ENCODE measurements at regions of chr2 and their contacts with region 1.

Region 1: GRCh38 chr2:96554293-96555145 is 18.0 kb downstream of the ARID5A start:
- DNase-seq: peak; percentile 58
- H3K4me3 Mint-ChIP-seq: no peak overlapping the region
- H3K27ac Mint-ChIP-seq: no peak overlapping the region
- H3K4me1 Mint-ChIP-seq: peaks cover 7% of the 10 kb centered on the region
- H3K27me3 Mint-ChIP-seq: no peaks in the 10 kb centered on the region
- CTCF ChIP-seq: peak; percentile 89

Region 2: DNA sequence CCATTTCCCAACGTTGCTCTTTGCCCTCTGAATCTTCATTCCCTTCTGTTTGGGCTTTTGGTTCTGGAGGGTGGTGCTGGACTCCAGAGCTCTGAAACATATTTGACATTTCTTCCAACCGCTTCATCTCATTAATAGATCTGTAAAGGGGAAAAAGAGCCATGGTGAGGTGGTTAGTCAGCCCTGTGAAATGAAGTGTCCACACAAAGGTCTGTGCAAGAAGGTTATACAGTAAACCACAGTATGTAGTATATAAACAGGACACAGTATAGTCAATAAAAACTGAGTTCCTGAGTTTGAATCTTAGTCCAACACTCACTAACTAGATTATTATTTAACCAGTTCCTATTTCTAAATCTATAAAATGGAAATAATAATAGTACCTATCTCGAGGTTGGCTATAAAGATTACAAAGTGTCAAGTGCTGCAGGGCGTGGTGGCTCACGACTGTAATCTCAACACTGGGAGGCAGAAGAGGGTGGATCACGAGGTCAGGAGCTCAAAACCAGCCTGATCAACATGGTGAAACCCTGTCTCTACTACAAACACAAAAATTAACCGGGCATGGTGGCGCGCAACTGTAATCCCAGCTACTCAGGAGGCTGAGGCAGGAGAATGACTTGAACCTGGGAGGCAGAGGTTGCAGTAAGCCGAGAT is 359.0 kb before region 1 on chr2:
- CTCF ChIA-PET with region 1: no interaction called
- POLR2A ChIA-PET with region 1: no interaction called
- intact Hi-C with region 1: no loop called
- DNase-seq: no peak
- H3K4me3 Mint-ChIP-seq: no peak overlapping the region
- H3K27ac Mint-ChIP-seq: no peak overlapping the region
- H3K4me1 Mint-ChIP-seq: peaks cover 2% of the 10 kb centered on the region
- H3K27me3 Mint-ChIP-seq: no peaks in the 10 kb centered on the region
- CTCF ChIP-seq: no peak

Region 3: DNA sequence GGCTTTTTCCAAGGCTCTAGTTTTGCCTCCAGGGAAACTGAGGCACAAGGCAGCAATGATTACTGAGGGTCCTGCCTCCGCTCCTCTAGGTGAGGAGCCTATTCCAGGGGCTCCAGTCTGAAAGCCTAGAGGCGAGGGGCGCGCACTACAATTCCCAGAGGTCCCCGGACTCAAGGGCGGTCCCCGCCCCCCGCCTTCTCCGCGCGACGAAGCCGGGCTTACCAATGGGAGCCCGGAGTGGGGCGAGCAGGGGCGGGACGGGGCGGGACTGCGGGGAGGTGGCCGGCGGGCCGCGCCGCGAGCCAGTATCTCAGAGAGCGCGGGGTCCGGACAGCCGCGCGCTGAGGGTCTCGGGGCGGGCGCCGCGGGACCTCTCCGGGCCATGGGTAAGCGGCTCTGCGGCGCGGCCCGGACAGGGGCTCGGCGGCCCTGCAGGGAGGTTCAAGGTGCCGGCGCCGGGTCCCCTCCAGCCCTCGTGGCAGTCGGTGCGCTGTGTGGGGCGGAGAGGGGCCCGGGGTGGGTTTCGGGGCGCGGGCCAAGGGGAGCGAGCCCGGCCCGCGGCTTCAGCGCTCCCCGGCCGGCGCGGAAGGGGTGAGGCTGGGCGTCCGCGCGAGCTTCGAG is 18.0 kb before region 1 on chr2 and contains the start of gene ARID5A:
- CTCF ChIA-PET with region 1: interaction called, 46 read pairs
- POLR2A ChIA-PET with region 1: interaction called, 19 read pairs
- intact Hi-C with region 1: loop called (anchors 1 kb)
- DNase-seq: peak; percentile 82
- H3K4me3 Mint-ChIP-seq: peak within 1 kb of the TSS; percentile 76
- H3K27ac Mint-ChIP-seq: no peak within 1 kb of the TSS
- H3K4me1 Mint-ChIP-seq: peaks cover 30% of the 10 kb centered on the region
- H3K27me3 Mint-ChIP-seq: no peaks in the 10 kb centered on the region
- CTCF ChIP-seq: no peak
- total RNA-seq, gene ARID5A: 3.0 and 3.4 TPM in 2 replicates

Region 4: GRCh38 chr2:96541398-96542152 is 12.9 kb before region 1 on chr2:
- CTCF ChIA-PET with region 1: interaction called, 30 read pairs
- POLR2A ChIA-PET with region 1: interaction called, 7 read pairs
- intact Hi-C with region 1: loop called (anchors 1 kb)
- DNase-seq: no peak
- H3K4me3 Mint-ChIP-seq: no peak overlapping the region
- H3K27ac Mint-ChIP-seq: no peak overlapping the region
- H3K4me1 Mint-ChIP-seq: peaks cover 8% of the 10 kb centered on the region
- H3K27me3 Mint-ChIP-seq: no peaks in the 10 kb centered on the region
- CTCF ChIP-seq: no peak

Region 5: GRCh38 chr2:96565111-96565510 is 10.6 kb after region 1 on chr2:
- CTCF ChIA-PET with region 1: interaction called, 17 read pairs
- POLR2A ChIA-PET with region 1: no interaction called
- intact Hi-C with region 1: no loop called
- DNase-seq: no peak
- H3K4me3 Mint-ChIP-seq: no peak overlapping the region
- H3K27ac Mint-ChIP-seq: no peak overlapping the region
- H3K4me1 Mint-ChIP-seq: no peaks in the 10 kb centered on the region
- H3K27me3 Mint-ChIP-seq: no peaks in the 10 kb centered on the region
- CTCF ChIP-seq: no peak

Region 6: DNA sequence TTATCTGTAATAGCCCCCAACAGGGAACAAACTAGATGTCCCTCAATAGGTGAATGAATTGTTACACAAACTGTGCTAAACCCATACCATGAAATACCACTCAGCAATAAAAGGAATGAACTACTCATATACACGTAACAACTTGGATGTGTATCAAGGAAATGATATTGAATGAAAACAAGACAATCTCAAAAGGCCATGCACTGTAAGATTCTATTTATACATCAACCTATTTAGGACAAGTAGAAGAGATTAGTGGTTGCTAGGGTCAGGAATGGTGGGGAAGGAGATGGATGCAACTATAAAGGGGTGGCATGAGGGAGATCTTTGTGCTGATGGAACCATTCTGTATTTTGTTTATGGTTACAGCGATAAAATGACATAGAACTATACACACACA is 36.5 kb after region 1 on chr2:
- CTCF ChIA-PET with region 1: no interaction called
- POLR2A ChIA-PET with region 1: no interaction called
- intact Hi-C with region 1: no loop called
- DNase-seq: no peak
- H3K4me3 Mint-ChIP-seq: no peak overlapping the region
- H3K27ac Mint-ChIP-seq: no peak overlapping the region
- H3K4me1 Mint-ChIP-seq: no peaks in the 10 kb centered on the region
- H3K27me3 Mint-ChIP-seq: no peaks in the 10 kb centered on the region
- CTCF ChIP-seq: no peak